ENCODE measurements at regions of chr16 and their contacts with region 1.

Region 1: GRCh38 chr16:11396241-11397048 is 51.2 kb downstream of the RMI2 start:
- DNase-seq: peak; percentile 72
- ATAC-seq: peak; percentile 92
- H3K4me3 Mint-ChIP-seq: no peak overlapping the region
- H3K27ac Mint-ChIP-seq: peak overlapping the region; percentile 25
- H3K4me1 Mint-ChIP-seq: no peaks in the 10 kb centered on the region
- H3K27me3 Mint-ChIP-seq: no peaks in the 10 kb centered on the region
- CTCF ChIP-seq: peak; percentile 100

Region 2: DNA sequence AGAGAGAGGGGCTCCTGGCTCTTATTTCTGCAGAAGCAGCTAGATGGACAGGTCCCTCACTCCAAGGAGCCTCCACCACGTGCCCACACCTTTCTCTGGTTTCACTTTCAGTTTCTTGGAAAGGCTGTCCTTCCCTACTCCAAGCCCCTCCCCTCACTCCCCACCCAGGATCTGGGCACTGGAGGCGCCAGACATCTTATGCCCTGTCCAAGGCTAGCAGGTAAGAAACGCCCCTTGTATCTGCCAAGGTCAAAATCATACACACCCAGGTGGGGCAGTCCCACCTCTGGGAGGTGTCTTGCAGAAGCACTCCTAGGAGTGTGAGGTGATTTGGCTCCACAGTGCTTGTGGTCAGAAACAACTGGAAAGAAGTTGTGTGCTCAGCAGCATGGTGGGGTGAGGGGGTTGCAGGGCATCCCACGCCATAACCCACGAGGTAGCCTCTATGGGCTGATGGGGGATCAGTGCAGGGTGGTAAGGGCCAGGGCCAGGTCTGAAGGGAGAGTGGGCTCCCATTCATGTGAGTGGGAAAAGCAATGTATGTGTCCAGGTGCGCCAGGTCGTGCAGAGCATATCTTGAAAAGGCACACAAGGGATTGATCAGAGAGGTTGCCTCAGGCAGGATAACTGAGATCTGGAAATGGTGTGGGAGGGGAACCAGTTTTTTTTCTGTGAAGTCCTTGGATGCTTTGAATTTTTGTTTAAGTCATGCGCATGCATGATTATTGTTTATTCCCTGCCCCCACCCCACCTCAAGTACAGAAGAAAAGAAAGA is 83.5 kb before region 1 on chr16:
- CTCF ChIA-PET with region 1: no interaction called
- POLR2A ChIA-PET with region 1: no interaction called
- intact Hi-C with region 1: no loop called
- DNase-seq: peak; percentile 31
- ATAC-seq: peak; percentile 22
- H3K4me3 Mint-ChIP-seq: no peak overlapping the region
- H3K27ac Mint-ChIP-seq: no peak overlapping the region
- H3K4me1 Mint-ChIP-seq: peaks cover 44% of the 10 kb centered on the region
- H3K27me3 Mint-ChIP-seq: no peaks in the 10 kb centered on the region
- CTCF ChIP-seq: no peak

Region 3: DNA sequence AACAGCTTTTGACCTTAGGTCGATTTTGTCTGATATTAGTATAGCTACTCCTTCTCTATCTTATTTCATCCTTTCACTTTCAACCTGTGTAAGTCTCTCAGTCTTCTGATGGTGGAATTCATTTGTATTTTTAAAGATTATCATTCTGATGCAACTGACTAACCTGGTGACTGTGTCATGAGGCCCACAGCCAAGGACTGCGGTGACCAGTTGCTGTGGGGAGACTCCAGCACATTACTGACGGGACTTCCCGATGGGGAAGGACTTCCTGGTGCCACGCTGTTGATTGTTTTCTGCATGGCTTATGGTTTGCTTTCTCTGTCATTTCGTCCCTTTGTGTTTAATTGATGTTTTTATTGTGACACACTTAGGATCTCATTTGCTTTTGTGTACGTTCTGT is 17.0 kb before region 1 on chr16:
- CTCF ChIA-PET with region 1: interaction called, 20 read pairs
- POLR2A ChIA-PET with region 1: no interaction called
- intact Hi-C with region 1: no loop called
- DNase-seq: peak; percentile 72
- ATAC-seq: peak; percentile 93
- H3K4me3 Mint-ChIP-seq: no peak overlapping the region
- H3K27ac Mint-ChIP-seq: peak overlapping the region; percentile 67
- H3K4me1 Mint-ChIP-seq: peaks cover 13% of the 10 kb centered on the region
- H3K27me3 Mint-ChIP-seq: no peaks in the 10 kb centered on the region
- CTCF ChIP-seq: no peak

Measured in activated CD8-positive, alpha-beta T cell treated with anti-CD3 and anti-CD28 coated beads for 36 hours (primary cell).